ENCODE measurements at regions of chr13 and their contacts with region 1.

Region 1: GRCh38 chr13:95191821-95192563 is 109.3 kb downstream of the ABCC4 start:
- DNase-seq: peak; percentile 45
- ATAC-seq: peak; percentile 99
- H3K4me3 ChIP-seq: no peak overlapping the region
- H3K27ac ChIP-seq: peak overlapping the region; percentile 20; the same call in 1 of the 2 replicates
- H3K4me1 ChIP-seq: peaks cover 4% of the 10 kb centered on the region; the same call in 1 of the 2 replicates
- H3K27me3 ChIP-seq: no peaks in the 10 kb centered on the region
- CTCF ChIP-seq: peak; percentile 94 to 98 (median 97)
- EP300 ChIP-seq: no peak
- POLR2A ChIP-seq: no peak
- RAD21 ChIP-seq: peak; percentile 92

Region 2: DNA sequence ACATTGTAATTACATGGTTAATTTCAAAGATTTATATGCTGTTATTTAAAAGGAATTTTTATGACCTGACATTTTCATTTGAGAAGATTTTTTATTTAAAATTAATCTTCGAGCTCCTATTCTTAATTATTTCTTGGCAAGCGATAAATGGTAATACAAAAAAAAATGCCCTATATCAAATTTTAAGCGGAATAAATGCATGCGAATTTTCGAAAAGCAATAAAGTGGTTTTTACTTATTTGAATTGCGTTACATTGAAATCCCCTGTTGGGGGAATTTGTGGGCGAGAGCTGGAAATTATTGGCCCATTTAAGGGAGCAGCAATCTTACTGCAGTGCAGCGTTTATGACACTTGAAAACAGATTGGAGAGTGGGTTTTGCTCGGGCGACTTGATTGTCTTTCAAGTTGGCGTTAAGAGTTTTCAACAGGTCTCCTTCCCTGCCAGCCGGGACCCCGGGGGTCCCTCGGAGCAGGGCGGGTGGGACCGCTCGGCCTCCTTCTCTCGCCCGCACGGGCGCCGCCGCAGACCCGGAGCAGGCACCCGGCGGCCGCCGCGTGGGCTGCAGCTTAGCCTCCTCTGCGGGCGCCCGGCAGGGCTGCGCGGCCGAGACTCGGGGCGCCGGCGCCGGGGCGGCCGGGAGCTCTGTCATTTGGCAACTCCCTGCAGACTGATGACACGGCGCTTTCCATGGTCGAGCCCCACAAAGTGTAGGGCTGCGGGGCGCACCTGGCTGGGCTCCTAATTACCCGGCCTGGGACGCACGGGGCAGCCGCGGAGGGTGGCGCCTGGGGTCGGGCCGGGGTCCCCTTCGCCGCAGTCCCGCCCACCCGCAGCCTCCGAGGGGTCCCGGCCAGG is 224.6 kb before region 1 on chr13:
- CTCF ChIA-PET with region 1: no interaction called
- POLR2A ChIA-PET with region 1: no interaction called
- RAD21 ChIA-PET with region 1: no interaction called
- SMC1A ChIA-PET with region 1: no interaction called
- in situ Hi-C with region 1: no loop called
- intact Hi-C with region 1: no loop called
- DNase-seq: no peak
- ATAC-seq: peak; percentile 68
- H3K4me3 ChIP-seq: no peak overlapping the region
- H3K27ac ChIP-seq: no peak overlapping the region
- H3K4me1 ChIP-seq: no peaks in the 10 kb centered on the region
- H3K27me3 ChIP-seq: peaks cover 0 to 14% of the 10 kb centered on the region in 2 experiments; a peak in 2 of 4 replicates
- CTCF ChIP-seq: no peak
- EP300 ChIP-seq: no peak
- POLR2A ChIP-seq: no peak
- RAD21 ChIP-seq: no peak

Region 3: DNA sequence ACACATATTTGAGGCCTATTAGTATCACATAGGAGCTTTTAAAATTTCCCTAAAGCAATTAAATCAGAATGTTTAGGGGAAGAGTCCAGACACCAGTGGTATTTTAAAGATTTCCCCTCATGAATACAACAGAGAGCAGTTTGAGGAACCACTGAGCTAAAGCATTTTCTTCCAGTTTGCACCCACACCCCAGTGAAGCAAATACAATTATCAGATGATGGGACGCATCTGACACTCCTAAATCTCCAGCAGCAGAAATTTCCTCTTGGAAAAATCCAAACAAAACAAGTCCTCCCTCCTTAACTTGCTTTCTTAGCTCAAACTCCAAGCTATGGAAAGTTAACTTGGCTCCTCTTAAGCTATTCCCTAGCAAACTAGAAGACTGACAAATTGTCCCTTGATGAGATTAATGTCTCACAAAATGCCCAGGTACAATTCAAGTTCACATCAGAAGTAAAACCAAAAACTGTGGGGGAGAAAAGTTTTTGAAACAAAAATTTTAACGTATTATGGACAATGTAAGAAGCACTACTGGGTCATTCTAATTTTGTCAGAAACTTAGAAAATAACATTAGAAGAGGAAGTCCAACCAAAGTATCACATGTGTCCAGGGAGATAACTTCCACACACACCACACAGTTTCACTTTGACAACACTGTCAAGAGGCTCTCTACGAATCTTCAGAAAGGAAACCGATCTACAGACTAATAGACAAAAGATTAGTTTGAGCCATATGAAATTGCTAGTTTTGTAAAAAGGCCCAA is 35.1 kb after region 1 on chr13:
- CTCF ChIA-PET with region 1: interaction called, 9 read pairs
- POLR2A ChIA-PET with region 1: interaction called, 7 read pairs
- RAD21 ChIA-PET with region 1: interaction called, 15 read pairs
- SMC1A ChIA-PET with region 1: interaction called, 14 read pairs
- in situ Hi-C with region 1: no loop called
- intact Hi-C with region 1: no loop called
- DNase-seq: peak; percentile 88
- ATAC-seq: peak; percentile 88
- H3K4me3 ChIP-seq: peak overlapping the region; percentile 49; the same call in 1 of the 2 replicates
- H3K27ac ChIP-seq: peak overlapping the region; percentile 98
- H3K4me1 ChIP-seq: peaks cover 37% of the 10 kb centered on the region
- H3K27me3 ChIP-seq: no peaks in the 10 kb centered on the region
- CTCF ChIP-seq: no peak
- EP300 ChIP-seq: peak; percentile 51 to 57
- POLR2A ChIP-seq: no peak
- RAD21 ChIP-seq: no peak

Region 4: DNA sequence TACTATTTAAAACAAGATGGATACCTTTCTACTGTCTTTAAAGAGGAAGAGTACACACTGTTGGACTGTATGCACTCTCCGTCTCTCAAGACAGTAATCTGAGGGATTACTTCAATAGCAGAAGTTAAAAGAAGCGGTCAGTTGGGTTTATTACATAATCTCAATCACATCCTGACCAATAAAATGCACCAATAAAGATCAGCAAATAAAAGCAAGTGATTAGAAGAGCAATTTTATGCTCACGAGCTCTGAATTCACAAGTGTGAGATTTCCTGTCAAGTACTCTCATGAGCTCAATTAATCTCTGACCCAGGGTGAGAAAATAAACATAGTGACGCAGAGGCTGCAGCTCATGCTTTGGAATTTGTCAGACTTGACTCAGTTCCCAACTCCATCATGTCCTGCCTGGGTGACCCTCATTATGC is 97.0 kb after region 1 on chr13:
- CTCF ChIA-PET with region 1: interaction called, 10 read pairs
- POLR2A ChIA-PET with region 1: no interaction called
- RAD21 ChIA-PET with region 1: interaction called, 5 read pairs
- SMC1A ChIA-PET with region 1: interaction called, 157 read pairs
- in situ Hi-C with region 1: no loop called
- intact Hi-C with region 1: no loop called
- DNase-seq: no peak
- ATAC-seq: no peak
- H3K4me3 ChIP-seq: no peak overlapping the region
- H3K27ac ChIP-seq: no peak overlapping the region
- H3K4me1 ChIP-seq: peaks cover 17% of the 10 kb centered on the region
- H3K27me3 ChIP-seq: no peaks in the 10 kb centered on the region
- CTCF ChIP-seq: no peak
- EP300 ChIP-seq: no peak
- POLR2A ChIP-seq: no peak
- RAD21 ChIP-seq: no peak

Region 5: GRCh38 chr13:95367309-95367843 is 175.4 kb after region 1 on chr13:
- CTCF ChIA-PET with region 1: interaction called, 33 read pairs
- POLR2A ChIA-PET with region 1: no interaction called
- RAD21 ChIA-PET with region 1: interaction called, 3 read pairs
- SMC1A ChIA-PET with region 1: interaction called, 7 read pairs
- in situ Hi-C with region 1: no loop called
- intact Hi-C with region 1: no loop called
- DNase-seq: no peak
- ATAC-seq: no peak
- H3K4me3 ChIP-seq: no peak overlapping the region
- H3K27ac ChIP-seq: no peak overlapping the region
- H3K4me1 ChIP-seq: no peaks in the 10 kb centered on the region; the same call in 1 of the 2 replicates
- H3K27me3 ChIP-seq: no peaks in the 10 kb centered on the region
- CTCF ChIP-seq: no peak
- EP300 ChIP-seq: no peak
- POLR2A ChIP-seq: no peak
- RAD21 ChIP-seq: no peak

Region 6: DNA sequence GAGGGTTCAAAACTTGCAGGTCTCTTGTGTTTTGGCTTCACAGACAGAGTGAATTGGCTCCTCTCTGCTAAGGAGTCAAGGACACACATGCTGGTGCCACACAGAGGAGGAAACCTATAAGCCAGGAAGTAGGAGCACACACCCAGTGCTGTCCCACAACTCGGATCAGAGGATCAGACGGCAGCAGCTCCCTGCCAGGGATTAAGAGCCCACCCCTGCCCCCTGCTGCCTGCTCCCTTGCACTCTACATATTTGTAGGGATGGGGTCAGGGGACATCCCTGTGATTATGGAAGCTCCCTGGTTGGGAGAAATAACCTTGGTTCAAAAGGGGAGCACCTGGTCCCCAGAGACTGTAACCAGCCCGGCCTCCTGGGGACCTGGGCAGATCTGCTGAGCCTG is 283.0 kb after region 1 on chr13:
- CTCF ChIA-PET with region 1: interaction called, 25 read pairs
- POLR2A ChIA-PET with region 1: no interaction called
- RAD21 ChIA-PET with region 1: interaction called, 16 read pairs
- SMC1A ChIA-PET with region 1: interaction called, 7 read pairs
- in situ Hi-C with region 1: loop called (anchors 5 kb)
- intact Hi-C with region 1: loop called (anchors 1 kb)
- DNase-seq: no peak
- ATAC-seq: no peak
- H3K4me3 ChIP-seq: no peak overlapping the region
- H3K27ac ChIP-seq: no peak overlapping the region
- H3K4me1 ChIP-seq: peaks cover 15% of the 10 kb centered on the region
- H3K27me3 ChIP-seq: no peaks in the 10 kb centered on the region
- CTCF ChIP-seq: no peak
- EP300 ChIP-seq: no peak
- POLR2A ChIP-seq: no peak
- RAD21 ChIP-seq: no peak